Gastrocnemius medialis (tissue), 4 donors: ENCODE measurements at regions of chr11 and their contacts with region 1.

Region 1: DNA sequence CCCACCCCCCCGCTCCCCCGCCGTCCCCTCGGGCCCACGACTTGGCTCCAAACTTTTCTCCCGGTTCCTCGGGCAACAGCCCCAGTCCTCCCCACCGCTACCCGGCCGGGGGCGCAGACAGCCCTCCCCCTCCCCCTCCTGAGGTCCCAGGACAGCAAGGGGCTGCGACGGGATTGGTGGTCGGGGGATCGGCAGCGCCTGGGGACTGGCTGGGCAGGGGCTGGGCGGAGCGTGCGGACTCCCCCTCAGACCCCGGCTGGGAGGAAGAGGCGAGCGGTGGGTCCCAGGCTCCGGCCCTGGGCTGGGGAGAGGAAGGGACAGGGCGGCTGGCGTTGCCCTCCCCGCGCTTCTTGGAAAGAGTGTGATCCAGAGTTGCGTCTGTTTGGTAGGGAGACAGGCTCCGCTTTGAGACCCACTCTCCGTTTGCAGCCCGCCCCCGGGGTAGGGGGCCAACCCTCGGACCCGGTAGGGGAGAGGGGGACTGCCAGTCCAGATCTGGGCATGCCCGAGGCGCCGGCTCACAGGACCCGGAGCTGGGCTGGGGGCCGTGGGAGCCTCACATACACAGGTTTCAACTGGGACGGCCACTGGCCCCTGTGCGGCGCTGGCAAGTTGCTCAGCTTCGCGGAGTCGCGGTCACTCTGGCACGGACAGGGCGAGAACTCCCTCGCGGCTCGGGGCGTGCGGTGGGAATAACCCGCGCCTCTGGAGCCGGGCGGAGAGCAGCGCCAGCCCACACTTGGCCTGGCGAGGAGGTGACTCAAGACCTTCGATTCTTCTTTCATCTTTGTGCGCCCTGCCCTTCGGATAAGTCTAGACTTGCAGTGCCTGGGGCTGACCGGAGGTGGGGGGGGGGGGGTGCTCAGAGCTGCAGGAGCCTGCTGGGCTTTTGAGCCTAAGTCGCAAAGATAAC is 1.0 kb downstream of the TSKU start:
- DNase-seq: no peak
- ATAC-seq: peak; percentile 16 to 20
- H3K4me3 ChIP-seq: peak overlapping the region; percentile 62 to 81 (median 78)
- H3K27ac ChIP-seq: peak overlapping the region; percentile 65 to 81 (median 76)
- H3K4me1 ChIP-seq: peaks cover 4 to 8% of the 10 kb centered on the region in 2 donors
- H3K27me3 ChIP-seq: peaks cover 0 to 8% (median 0%) of the 10 kb centered on the region in 3 donors
- CTCF ChIP-seq: no peak
- POLR2A ChIP-seq: no peak

Region 2: DNA sequence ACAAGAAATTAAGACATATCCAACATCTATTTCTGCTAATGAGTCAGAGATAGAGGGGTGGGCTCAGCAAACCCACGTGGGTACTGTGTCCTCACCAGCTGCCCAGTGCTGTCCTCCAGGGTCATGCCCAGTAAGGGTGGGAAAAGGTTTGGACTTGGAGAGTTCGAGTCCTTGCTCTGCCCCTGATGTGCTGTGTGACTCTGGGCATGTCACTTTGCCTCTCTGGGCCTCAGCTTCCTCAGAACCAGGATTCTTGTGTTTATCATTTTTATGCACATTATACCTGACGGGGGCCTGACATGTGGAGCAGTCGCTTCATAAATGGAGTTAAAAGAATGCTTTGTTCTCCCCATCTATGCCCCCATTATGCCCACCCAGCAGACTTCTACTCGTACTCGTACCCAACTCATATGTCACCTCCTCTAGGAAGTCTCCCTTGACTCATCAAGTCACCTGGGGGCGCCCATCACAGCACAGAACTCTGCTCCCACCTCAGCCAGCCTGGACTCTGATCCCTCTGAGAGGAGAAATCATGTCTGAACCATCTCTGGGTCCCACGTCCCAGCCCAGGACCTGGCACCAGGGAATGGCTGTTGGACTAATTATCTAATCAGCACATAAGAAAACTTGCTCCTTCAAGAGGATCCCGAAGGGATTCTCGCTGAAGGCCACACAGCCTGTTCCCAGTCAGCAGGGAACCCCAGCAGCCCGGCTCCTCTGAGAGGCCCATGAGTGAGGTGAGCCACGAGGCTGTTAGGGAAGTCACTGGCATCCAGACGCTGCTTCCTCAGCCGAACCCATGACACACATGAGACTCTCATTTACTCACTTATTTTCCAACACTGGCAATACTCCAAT is 39.7 kb before region 1 on chr11:
- in situ Hi-C with region 1: loop called in 1 of 4 experiments (anchors 5 kb)
- intact Hi-C with region 1: no loop called
- DNase-seq: peak in 1 of 2 donors; percentile 48
- ATAC-seq: peak in 1 of 2 donors; percentile 51
- H3K4me3 ChIP-seq: no peak overlapping the region
- H3K27ac ChIP-seq: no peak overlapping the region
- H3K4me1 ChIP-seq: no peaks in the 10 kb centered on the region
- H3K27me3 ChIP-seq: no peaks in the 10 kb centered on the region
- CTCF ChIP-seq: no peak
- POLR2A ChIP-seq: no peak

Region 3: DNA sequence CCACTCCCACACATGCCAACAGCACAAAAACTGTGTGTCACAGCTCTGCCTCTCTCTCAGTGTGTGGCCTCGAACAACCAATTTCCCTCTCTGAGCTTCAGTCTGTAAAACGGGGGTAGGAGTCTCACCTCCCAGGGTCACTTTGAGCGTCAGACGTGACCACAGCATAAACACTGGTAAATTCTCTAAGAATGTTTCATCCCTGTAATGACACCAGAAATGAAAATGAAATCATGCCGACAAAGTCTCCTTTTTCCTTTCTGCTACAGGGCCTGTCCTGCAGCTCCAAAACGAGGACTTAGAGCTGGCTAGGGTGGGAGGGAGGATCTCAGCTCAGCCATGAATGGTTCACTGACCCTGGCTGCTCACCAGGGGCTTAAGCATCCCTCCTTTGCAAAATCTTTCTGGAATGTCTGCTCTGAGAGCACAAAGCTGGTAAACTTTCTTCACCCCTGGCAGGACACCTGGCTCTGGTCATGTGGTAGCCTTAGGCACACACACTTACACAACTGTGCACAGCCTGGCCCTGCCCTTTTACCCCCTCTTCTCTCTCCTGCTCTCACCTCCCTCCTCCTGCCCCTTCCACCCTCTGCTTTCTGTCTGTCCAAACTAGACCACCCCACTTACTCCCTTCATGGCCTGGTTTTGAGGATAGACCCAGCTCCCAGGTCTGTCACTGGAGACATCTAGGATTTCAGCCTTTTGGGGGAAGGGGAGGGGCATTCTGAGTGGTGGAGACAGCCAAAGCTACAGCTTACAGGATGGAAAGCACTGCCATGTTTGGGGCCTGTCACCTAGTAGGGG is 13.3 kb before region 1 on chr11:
- in situ Hi-C with region 1: no loop called
- intact Hi-C with region 1: loop called (anchors 2 kb)
- DNase-seq: peak; percentile 58 to 82
- ATAC-seq: peak; percentile 47 to 61
- H3K4me3 ChIP-seq: no peak overlapping the region
- H3K27ac ChIP-seq: peak overlapping the region; percentile 27 to 77 (median 34)
- H3K4me1 ChIP-seq: peaks cover 43 to 53% of the 10 kb centered on the region in 2 donors
- H3K27me3 ChIP-seq: no peaks in the 10 kb centered on the region
- CTCF ChIP-seq: no peak
- POLR2A ChIP-seq: no peak